OCI-LY7 (cell line): ENCODE measurements at regions of chr2 and their contacts with region 1.

Region 1: DNA sequence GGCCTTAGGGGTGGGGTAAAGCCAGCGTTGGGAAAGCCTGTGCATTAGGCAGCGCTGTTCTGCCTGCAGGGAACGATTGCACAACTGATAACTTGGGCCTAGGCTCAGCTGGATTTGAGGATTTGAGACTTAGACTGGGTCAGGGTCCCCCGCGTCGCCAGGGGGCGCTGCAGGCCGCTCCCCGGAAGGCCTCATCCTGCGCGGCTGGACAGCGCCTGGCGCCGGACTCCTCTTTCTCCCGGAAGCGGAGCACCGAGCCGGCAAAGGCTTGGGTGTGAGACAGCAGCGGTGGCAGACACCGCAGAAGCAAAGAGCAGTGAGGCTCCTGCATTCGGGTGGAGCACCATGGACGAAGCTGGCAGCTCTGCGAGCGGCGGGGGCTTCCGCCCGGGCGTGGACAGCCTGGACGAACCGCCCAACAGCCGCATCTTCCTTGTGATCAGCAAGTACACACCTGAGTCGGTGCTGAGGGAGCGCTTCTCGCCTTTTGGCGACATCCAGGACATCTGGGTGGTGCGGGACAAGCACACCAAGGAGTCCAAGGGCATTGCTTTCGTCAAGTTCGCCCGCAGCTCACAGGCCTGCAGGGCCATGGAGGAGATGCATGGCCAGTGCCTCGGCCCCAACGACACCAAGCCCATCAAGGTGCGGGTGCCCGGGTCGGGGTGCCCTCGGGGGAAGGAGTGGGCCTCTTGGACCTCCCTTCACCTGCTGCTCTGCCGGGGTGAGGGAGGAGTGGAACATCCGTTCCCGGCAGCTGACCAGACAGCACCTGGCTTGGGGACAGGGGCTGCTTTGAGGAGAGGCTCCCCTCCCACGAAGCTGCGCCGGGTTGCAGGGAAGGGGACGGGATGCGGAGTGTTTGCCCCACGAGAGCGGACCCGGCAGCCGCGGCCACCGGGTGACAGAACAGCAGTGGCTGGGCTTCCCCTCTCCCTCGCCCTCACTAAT is at the start of gene RBM45:
- DNase-seq: peak; percentile 93
- H3K4me3 ChIP-seq: peak within 1 kb of the TSS; percentile 87
- H3K27ac ChIP-seq: peak within 1 kb of the TSS; percentile 10
- H3K4me1 ChIP-seq: peaks cover 11% of the 10 kb centered on the region
- CTCF ChIP-seq: peak; percentile 93
- total RNA-seq, gene RBM45: 13.2 and 13.9 TPM in 2 replicates

Region 2: DNA sequence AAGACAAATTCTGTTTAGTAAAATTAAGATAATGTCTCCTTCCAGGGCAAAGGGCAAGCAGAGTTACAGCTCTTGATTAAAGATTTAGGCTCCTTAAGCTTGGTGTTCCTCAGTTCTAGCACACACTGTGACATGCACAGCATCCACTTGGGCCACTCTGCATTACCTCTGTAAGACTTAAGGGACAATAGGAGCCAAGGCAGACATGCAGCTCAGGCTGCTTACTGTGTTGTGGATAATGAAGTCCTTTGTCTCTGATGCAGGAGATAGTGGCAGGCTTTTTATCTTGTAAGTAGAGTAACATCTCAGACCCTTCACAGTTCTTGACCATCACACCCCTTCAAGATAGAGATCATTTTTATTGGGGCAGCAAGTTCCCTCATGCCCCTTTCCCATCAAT is 31.0 kb after region 1 on chr2:
- CTCF ChIA-PET with region 1: no interaction called
- POLR2A ChIA-PET with region 1: no interaction called
- intact Hi-C with region 1: no loop called
- DNase-seq: no peak
- H3K4me3 ChIP-seq: no peak overlapping the region
- H3K27ac ChIP-seq: no peak overlapping the region
- H3K4me1 ChIP-seq: no peaks in the 10 kb centered on the region
- CTCF ChIP-seq: no peak

Region 3: DNA sequence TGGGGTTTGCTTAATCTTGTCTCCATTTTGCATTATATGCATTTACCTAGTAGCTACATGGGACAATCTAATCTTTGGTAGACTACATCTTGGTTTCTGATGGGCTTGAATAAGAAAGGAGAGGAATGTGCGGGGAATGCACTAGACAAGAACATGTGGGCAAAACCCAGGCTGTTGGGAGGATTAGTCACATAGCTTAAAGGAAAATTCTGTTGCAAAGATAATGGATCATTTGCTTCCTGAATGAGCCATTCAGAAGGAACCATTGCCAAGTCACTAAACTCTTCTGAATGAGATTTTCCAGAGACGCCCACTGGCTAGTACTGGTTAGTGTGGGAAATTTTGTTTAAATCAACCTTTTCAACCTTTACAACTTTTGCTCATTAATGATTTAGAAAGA is 166.7 kb after region 1 on chr2:
- CTCF ChIA-PET with region 1: no interaction called
- POLR2A ChIA-PET with region 1: no interaction called
- intact Hi-C with region 1: loop called (anchors 2 kb)
- DNase-seq: no peak
- H3K4me3 ChIP-seq: no peak overlapping the region
- H3K27ac ChIP-seq: no peak overlapping the region
- H3K4me1 ChIP-seq: no peaks in the 10 kb centered on the region
- CTCF ChIP-seq: no peak

Region 4: DNA sequence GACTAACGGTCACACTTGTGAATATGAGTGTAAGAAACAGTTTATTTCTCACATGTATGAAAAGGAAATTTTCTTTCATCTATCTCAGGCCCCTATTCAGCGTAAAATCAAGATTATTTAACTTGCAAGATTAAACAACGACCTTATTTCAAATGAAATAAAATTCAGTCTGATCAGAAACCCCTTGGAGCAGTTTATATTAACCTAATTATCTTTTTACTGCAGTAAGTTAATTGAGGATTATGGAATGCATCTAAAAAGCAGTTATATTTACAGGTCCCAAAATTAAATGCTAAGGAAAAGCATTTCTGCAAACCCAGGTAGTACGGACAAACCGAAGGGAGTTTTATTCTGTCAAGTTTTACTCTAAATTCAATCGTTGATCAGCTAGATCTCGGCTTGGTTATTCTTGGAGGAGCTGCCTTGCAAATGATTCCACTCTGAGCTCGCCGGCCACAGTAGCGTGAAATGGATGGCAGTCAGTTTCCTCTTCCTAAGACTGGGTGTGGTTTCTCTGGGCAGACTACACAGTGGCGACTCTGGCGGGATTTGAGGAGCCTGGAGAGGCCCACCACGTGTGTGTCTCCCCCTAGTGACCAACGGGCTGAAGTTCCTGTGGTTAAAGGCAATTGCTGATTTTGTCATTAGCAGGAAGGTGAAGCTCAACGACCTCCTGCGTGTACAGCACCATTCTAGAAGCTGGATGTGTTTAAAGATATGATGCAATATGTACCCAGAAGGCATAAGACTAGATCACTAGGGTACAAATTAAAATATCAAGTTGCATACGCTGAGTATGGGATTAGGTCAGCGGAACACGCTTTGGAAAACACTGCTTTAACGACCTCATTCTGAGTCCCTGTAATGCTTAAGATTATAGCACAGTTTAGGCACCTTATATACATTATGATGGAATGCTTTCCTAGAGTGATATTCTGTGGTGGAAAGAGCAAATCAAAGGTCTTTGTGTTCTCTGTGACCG is 302.1 kb after region 1 on chr2:
- CTCF ChIA-PET with region 1: no interaction called
- POLR2A ChIA-PET with region 1: interaction called, 3 read pairs
- intact Hi-C with region 1: loop called (anchors 5 kb)
- DNase-seq: peak; percentile 88
- H3K4me3 ChIP-seq: peak overlapping the region; percentile 39
- H3K27ac ChIP-seq: no peak overlapping the region
- H3K4me1 ChIP-seq: peaks cover 16% of the 10 kb centered on the region
- CTCF ChIP-seq: peak; percentile 93

Region 5: DNA sequence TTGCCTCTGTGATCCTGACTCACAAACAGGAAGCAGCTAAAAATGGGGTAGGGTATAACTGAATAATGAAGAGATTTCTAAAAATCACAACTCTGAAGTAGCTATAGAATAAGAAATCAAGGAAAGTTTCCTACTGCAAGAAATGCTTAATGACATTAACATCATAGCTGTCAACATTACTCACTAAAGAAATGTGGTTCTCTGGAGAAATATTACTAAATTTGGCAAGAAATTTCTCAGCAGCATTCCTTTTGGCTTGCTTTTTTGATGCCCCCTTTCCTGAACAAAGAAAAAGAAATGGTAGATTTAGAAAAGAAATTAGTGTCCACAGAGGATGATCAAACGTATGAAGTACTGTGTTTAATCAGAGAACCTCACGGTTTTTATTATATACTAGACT is 328.9 kb after region 1 on chr2:
- CTCF ChIA-PET with region 1: no interaction called
- POLR2A ChIA-PET with region 1: no interaction called
- intact Hi-C with region 1: no loop called
- DNase-seq: no peak
- H3K4me3 ChIP-seq: no peak overlapping the region
- H3K27ac ChIP-seq: no peak overlapping the region
- H3K4me1 ChIP-seq: no peaks in the 10 kb centered on the region
- CTCF ChIP-seq: no peak